PC-3 (cell line): ENCODE measurements at regions of chr3 and their contacts with region 1.

Region 1: DNA sequence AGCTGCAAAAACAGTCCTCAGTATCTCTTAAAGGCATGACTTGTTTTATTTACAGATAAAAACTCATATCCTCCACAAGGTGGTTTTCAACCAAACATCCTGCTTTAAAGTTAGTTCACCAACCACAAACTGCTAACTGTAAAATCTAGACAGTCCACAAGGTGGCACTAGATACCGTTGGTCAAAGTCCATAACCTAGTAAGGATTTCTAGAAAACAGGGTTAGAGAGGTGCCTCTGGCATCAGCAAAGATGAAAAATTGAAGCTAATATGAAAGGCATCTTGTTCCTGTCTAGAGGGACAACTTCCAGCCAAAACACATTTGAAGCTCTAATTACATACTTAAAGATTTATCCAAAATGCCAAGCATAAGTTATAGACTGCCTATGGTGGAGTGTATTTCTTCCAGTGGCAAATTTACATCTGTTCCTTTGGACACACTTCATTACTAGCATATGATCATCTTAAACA is 56.0 kb downstream of the ZMAT3 start:
- DNase-seq: peak; percentile 96
- ATAC-seq: peak; percentile 86
- H3K4me3 ChIP-seq: no peak overlapping the region
- H3K27ac ChIP-seq: no peak overlapping the region
- H3K4me1 ChIP-seq: peaks cover 4% of the 10 kb centered on the region; the same call in 1 of the 2 replicates
- H3K27me3 ChIP-seq: no peaks in the 10 kb centered on the region
- CTCF ChIP-seq: peak; percentile 95

Region 2: GRCh38 chr3:178754852-178755510 is 260.6 kb before region 1 on chr3:
- CTCF ChIA-PET with region 1: no interaction called
- POLR2A ChIA-PET with region 1: no interaction called
- intact Hi-C with region 1: no loop called
- DNase-seq: no peak
- ATAC-seq: no peak
- H3K4me3 ChIP-seq: no peak overlapping the region
- H3K27ac ChIP-seq: no peak overlapping the region
- H3K4me1 ChIP-seq: no peaks in the 10 kb centered on the region
- H3K27me3 ChIP-seq: 0 out of 2 replicates have a peak, but pooled peaks cover 3% of the 10 kb centered on the region
- CTCF ChIP-seq: no peak

Region 3: DNA sequence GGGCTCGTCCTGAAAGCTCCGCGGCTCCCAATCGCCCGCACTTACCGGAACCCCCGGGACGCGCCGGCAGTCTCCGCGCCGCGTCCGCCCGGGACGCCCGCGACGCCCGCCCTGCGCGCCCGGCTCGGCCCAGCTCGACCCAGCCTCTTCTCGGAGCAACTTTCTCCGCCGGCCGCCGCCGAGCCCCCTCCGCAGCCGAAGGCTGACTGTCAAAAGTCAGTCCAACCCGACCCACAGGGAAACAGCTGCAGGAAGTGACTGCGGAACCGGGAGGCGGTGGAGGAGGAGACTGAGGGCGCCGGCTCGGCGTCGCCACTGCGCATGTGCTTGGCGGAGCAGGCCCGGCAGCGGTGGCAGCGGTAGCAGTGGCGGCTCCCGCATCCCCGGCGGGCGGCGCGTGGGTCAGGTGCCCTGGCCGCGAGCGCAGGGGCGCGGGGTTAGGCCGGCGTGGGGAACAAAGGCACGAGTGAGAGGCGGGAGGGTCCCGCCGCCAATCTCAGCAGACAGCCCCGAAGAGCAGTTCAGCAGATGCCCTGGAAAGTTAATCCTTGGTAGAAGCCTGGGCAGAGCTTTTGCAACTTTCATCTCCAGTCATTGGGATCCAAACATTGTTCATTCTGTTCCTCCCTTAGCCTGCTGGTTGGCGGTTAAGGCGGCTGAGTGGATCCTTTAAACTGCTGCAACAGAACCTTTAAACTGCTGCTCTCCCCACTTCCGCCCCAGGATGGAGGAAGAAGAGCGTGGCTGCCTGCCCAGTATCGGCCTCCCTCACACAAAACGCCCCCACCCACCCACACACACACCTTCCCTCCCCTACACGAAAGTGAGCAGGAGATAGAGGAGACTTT is 56.2 kb after region 1 on chr3 and contains the start of gene ZMAT3:
- CTCF ChIA-PET with region 1: interaction called, 3 read pairs
- POLR2A ChIA-PET with region 1: no interaction called
- intact Hi-C with region 1: loop called (anchors 2 kb)
- DNase-seq: peak; percentile 83
- ATAC-seq: peak; percentile 91
- H3K4me3 ChIP-seq: peak within 1 kb of the TSS; percentile 82
- H3K27ac ChIP-seq: peak within 1 kb of the TSS; percentile 27
- H3K4me1 ChIP-seq: peaks cover 9% of the 10 kb centered on the region
- H3K27me3 ChIP-seq: no peaks in the 10 kb centered on the region
- CTCF ChIP-seq: no peak
- total RNA-seq, gene ZMAT3: 2.0 and 2.9 TPM in 2 replicates

Region 4: GRCh38 chr3:179272385-179272784 is 256.8 kb after region 1 on chr3:
- CTCF ChIA-PET with region 1: no interaction called
- POLR2A ChIA-PET with region 1: no interaction called
- intact Hi-C with region 1: loop called (anchors 1 kb)
- DNase-seq: peak; percentile 46
- ATAC-seq: peak; percentile 68
- H3K4me3 ChIP-seq: no peak overlapping the region
- H3K27ac ChIP-seq: no peak overlapping the region
- H3K4me1 ChIP-seq: no peaks in the 10 kb centered on the region
- H3K27me3 ChIP-seq: no peaks in the 10 kb centered on the region
- CTCF ChIP-seq: peak; percentile 64

Region 5: DNA sequence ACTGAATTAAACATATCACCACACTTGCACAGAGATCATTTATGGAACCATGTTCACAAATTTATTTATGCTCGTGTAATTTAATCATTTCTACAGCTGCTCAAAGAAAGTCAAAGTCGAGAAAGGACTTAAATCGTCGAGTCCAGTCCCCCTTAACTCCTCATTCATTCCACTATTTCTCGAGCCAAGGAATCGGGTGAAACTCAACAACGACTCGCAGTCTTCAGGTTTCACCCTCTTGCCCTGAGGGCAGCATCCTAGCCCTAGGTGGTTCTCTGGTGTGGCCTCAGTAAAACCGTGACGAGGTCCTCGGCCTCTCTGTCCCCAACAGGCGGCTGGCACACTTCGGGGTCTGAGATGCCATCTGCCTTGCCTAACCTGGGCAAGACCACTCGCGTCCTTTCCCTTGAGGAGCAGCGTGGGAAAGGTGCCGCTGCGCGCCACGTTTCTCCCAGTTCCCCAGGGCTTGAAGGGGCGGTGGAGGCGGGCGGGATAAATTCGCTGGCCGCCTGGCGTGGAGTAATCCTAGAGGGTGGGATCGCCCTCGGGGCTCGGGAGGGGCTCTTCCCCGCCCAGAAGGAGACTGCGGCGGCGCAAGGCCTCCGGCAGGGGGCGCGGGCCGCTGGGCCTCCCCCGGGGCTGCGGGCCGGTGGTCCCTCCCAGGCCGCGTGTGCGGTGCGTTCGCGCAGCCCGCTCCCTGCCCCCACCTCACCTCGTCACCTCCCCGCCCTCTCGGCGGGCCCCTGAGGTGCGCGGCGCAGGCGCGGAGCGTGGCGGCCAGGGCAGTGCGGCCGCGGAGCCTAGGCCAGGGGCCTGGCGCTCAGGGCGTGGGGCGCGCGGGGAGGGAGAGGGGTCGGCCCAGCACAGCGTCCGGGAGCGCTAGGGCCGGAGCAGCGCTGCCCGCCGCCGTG is 307.0 kb after region 1 on chr3 and contains the start of gene ZNF639:
- CTCF ChIA-PET with region 1: no interaction called
- POLR2A ChIA-PET with region 1: no interaction called
- intact Hi-C with region 1: loop called (anchors 1 kb)
- DNase-seq: peak; percentile 89
- ATAC-seq: peak; percentile 72
- H3K4me3 ChIP-seq: peak within 1 kb of the TSS; percentile 82
- H3K27ac ChIP-seq: peak within 1 kb of the TSS; percentile 68
- H3K4me1 ChIP-seq: peaks cover 24% of the 10 kb centered on the region; the same call in 1 of the 2 replicates
- H3K27me3 ChIP-seq: no peaks in the 10 kb centered on the region
- CTCF ChIP-seq: peak; percentile 72
- total RNA-seq, gene ZNF639: 52.5 and 60.4 TPM in 2 replicates